ENCODE measurements at regions of chr2 and their contacts with region 1.

Region 1: GRCh38 chr2:20225294-20226151 is 593 bp upstream of the SDC1 start:
- DNase-seq: no peak
- H3K4me3 ChIP-seq: peak overlapping the region; percentile 68 to 77
- H3K27ac ChIP-seq: peak overlapping the region in 1 of 2 experiments; percentile 99; a peak in 2 of 4 replicates
- H3K4me1 ChIP-seq: peaks cover 26 to 30% of the 10 kb centered on the region in 2 experiments
- H3K27me3 ChIP-seq: no peaks in the 10 kb centered on the region
- CTCF ChIP-seq: peak; percentile 72
- EP300 ChIP-seq: no peak
- RAD21 ChIP-seq: peak; percentile 81

Region 2: GRCh38 chr2:20040489-20041172 is 184.9 kb before region 1 on chr2:
- CTCF ChIA-PET with region 1: no interaction called
- POLR2A ChIA-PET with region 1: no interaction called
- DNase-seq: no peak
- H3K4me3 ChIP-seq: no peak overlapping the region
- H3K27ac ChIP-seq: no peak overlapping the region
- H3K4me1 ChIP-seq: peaks cover 3 to 4% of the 10 kb centered on the region in 2 experiments; a peak in 3 of 4 replicates
- H3K27me3 ChIP-seq: no peaks in the 10 kb centered on the region
- CTCF ChIP-seq: no peak
- EP300 ChIP-seq: no peak
- RAD21 ChIP-seq: no peak

Region 3: GRCh38 chr2:20106746-20107145 is 118.8 kb before region 1 on chr2:
- CTCF ChIA-PET with region 1: interaction called, 65 read pairs
- POLR2A ChIA-PET with region 1: no interaction called
- DNase-seq: no peak
- H3K4me3 ChIP-seq: no peak overlapping the region
- H3K27ac ChIP-seq: no peak overlapping the region
- H3K4me1 ChIP-seq: no peaks in the 10 kb centered on the region; a peak in 1 of 4 replicates
- H3K27me3 ChIP-seq: no peaks in the 10 kb centered on the region
- CTCF ChIP-seq: peak; percentile 20; the same call in 1 of the 2 replicates
- EP300 ChIP-seq: no peak
- RAD21 ChIP-seq: no peak

Region 4: DNA sequence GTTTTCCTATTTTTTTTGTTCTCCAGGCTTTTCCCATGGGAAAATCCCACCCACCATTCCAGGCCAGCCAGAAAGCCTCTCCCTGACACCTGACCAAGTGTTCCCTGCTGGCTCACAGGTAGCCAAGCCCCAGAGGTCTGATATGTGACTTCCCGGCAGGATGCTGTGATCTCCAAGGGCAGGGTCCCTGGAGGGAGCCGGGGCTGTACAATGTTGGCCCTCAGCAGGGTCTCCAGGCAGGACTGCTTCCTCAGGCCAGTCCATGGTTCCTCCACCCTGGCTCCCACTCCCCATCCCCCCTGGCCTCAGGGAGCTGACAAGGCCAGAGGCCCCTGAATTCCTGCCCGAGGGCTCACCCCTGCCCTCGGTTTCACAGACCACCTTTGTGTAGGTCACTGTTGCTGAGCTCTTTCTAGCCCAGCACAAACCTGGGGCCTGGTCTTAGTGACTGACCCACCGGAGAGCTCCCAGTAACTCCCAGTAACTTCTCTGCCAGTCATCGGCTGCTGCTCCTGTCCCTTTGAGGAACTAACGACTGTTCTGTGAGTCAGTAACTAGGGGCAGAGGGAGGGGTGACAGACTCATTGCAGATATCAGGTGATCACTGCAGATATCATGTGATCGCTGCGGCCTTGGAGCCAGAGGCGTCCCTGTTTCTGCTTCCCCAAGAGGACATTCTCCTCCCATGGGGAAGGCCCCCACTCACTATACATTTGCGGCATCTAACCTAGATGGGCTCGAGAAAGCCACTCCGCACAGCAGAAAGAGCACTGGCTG is 39.3 kb before region 1 on chr2:
- CTCF ChIA-PET with region 1: interaction called, 12 read pairs
- POLR2A ChIA-PET with region 1: no interaction called
- DNase-seq: no peak
- H3K4me3 ChIP-seq: no peak overlapping the region
- H3K27ac ChIP-seq: peak overlapping the region in 1 of 2 experiments; percentile 55; a peak in 2 of 4 replicates
- H3K4me1 ChIP-seq: peaks cover 19 to 32% of the 10 kb centered on the region in 2 experiments; a peak in 2 of 4 replicates
- H3K27me3 ChIP-seq: no peaks in the 10 kb centered on the region
- CTCF ChIP-seq: no peak
- EP300 ChIP-seq: no peak
- RAD21 ChIP-seq: no peak

Region 5: DNA sequence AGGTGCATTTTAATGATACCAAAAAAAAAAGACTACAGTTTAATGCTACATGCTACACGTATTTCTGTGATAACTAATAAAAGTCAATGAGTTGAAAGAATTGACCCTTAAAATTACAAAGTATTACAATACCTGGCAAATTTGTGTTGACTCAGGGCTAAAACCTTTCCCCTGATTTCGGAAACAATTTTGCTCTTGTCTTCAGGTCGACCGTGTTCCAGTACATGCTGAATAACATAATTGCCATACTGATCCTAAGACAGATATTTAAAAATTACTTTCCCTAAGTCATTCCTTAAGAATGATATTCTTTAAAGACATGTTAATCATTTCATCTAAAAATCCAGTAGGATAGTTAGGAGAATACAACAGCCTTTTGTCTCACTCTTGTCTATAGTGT is 29.2 kb after region 1 on chr2:
- CTCF ChIA-PET with region 1: interaction called, 16 read pairs
- POLR2A ChIA-PET with region 1: no interaction called
- DNase-seq: no peak
- H3K4me3 ChIP-seq: no peak overlapping the region
- H3K27ac ChIP-seq: no peak overlapping the region
- H3K4me1 ChIP-seq: no peaks in the 10 kb centered on the region
- H3K27me3 ChIP-seq: no peaks in the 10 kb centered on the region
- CTCF ChIP-seq: no peak
- EP300 ChIP-seq: no peak
- RAD21 ChIP-seq: no peak

Region 6: DNA sequence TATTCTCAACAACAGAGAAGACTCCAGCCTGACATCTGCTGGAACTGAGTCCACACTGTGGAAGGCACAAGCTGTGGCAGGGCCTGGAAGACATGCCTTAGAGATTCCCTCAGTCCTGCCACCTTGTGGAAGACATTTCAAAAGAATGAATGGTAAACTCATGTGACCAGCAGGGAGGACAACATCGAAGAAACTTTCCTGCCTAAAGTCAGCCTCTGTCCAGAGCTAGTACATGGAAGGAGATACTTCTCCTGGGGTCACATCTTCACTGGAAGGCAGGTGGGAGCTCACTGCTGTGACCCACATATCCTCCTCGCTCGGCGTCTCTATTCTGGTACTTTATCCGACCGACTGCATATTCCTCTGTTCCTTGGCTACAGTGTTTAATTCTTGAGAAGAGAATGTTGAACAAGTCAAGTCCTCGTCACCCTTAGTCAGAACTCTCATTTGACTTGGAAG is 65.6 kb after region 1 on chr2:
- CTCF ChIA-PET with region 1: interaction called, 22 read pairs
- POLR2A ChIA-PET with region 1: no interaction called
- DNase-seq: peak; percentile 79
- H3K4me3 ChIP-seq: no peak overlapping the region
- H3K27ac ChIP-seq: peak overlapping the region; percentile 37 to 64
- H3K4me1 ChIP-seq: peaks cover 0 to 7% of the 10 kb centered on the region in 2 experiments; a peak in 2 of 4 replicates
- H3K27me3 ChIP-seq: no peaks in the 10 kb centered on the region
- CTCF ChIP-seq: peak; percentile 89
- EP300 ChIP-seq: no peak
- RAD21 ChIP-seq: peak; percentile 74